Activated CD4-positive, alpha-beta T cell treated with anti-CD3 and anti-CD28 coated beads, Interleukin-2, amount 10 ng/mL, durations not matched to agents 24 days and 14 days (primary cell): ENCODE measurements at regions of chr18 and their contacts with region 1.

Region 1: GRCh38 chr18:63936156-63936931 is 12.8 kb upstream of the HMSD start:
- DNase-seq: peak; percentile 89
- H3K4me3 Mint-ChIP-seq: no peak overlapping the region
- H3K27ac Mint-ChIP-seq: peak overlapping the region; percentile 25
- H3K4me1 Mint-ChIP-seq: peaks cover 3% of the 10 kb centered on the region
- H3K27me3 Mint-ChIP-seq: peaks cover 27% of the 10 kb centered on the region

Region 2: GRCh38 chr18:63518178-63519012 is 417.9 kb before region 1 on chr18:
- intact Hi-C with region 1: loop called (anchors 2 kb)
- DNase-seq: peak; percentile 88
- H3K4me3 Mint-ChIP-seq: no peak overlapping the region
- H3K27ac Mint-ChIP-seq: no peak overlapping the region
- H3K4me1 Mint-ChIP-seq: no peaks in the 10 kb centered on the region
- H3K27me3 Mint-ChIP-seq: peaks cover 34% of the 10 kb centered on the region

Region 3: GRCh38 chr18:63823518-63824219 is 112.7 kb before region 1 on chr18:
- intact Hi-C with region 1: loop called (anchors 2 kb)
- DNase-seq: peak; percentile 77
- H3K4me3 Mint-ChIP-seq: no peak overlapping the region
- H3K27ac Mint-ChIP-seq: no peak overlapping the region
- H3K4me1 Mint-ChIP-seq: no peaks in the 10 kb centered on the region
- H3K27me3 Mint-ChIP-seq: peaks cover 12% of the 10 kb centered on the region

Region 4: DNA sequence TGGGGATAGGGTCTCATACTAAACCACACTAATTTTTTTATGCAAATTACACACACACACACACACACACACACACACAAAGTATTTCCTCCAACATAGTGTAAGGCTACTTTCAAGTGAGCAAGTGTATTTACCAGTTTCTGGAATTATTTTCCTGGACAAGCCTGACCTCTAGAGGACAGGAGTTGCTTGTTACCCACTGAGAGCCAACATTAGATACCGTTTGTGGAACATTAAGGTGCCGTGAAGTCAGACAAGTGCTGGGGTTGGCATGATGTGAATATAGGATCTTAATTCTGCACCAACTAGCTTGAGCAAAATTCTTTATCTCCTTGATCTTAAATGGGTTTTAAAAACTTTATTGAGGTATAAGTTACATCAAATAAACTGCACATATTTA is 88.2 kb before region 1 on chr18:
- intact Hi-C with region 1: loop called (anchors 5 kb)
- DNase-seq: no peak
- H3K4me3 Mint-ChIP-seq: no peak overlapping the region
- H3K27ac Mint-ChIP-seq: no peak overlapping the region
- H3K4me1 Mint-ChIP-seq: no peaks in the 10 kb centered on the region
- H3K27me3 Mint-ChIP-seq: peaks cover 33% of the 10 kb centered on the region

Region 5: DNA sequence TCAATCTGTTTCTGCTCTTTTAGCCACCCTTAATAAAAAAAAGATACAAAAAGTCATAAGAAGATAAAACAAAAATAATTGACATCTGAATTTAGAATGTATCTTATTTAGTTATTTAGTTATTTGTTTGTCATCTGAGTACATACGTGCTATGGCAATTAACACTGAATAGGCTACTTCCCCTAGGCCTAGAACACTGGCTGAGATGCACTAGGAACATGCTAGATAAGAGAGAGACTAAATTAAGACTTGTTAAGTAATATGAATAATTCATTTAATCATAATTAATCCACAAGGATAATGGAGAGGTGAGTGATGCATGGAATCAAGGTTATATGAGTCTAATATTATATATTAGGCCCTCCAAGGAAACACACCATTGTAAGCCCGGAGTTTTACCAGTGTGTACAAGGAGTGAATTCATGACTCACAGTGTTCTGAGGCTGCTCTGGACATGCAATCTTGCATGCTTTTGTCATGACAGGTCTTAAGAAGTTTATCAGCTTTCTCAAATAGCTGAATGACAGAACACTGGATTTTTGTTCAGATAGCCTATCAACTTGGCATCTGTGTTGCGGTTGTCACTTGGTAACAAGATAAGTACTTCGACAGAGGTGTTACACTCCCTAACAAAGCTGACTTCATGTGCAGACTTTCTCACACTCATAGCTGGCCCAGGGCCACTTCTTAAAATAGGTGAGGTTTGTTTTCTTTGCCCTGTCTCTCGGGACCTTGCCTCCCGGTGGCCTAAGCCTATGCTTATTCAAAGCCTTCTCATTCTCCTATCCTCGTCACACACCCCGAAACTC is 53.8 kb before region 1 on chr18:
- intact Hi-C with region 1: loop called (anchors 5 kb)
- DNase-seq: peak; percentile 31
- H3K4me3 Mint-ChIP-seq: no peak overlapping the region
- H3K27ac Mint-ChIP-seq: no peak overlapping the region
- H3K4me1 Mint-ChIP-seq: peaks cover 8% of the 10 kb centered on the region
- H3K27me3 Mint-ChIP-seq: peaks cover 13% of the 10 kb centered on the region

Region 6: DNA sequence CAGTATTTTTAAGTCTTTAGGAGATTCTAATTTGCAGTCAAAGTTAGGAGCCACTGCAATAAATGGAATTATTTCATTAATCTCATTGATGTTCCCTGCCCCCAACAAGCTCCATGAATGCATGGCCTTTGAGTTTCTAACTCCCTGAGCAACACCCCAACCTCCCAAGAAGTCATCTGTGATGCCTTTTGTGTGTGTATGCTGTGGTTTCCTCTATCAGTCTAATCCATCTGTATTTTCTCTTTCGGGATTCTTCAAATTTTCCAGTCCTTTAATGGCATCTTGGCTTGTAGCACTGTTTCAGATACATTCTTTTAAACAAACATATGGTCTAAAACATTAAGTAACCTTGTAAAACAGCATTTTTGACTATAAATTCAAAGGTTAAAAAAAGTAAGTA is 11.8 kb before region 1 on chr18:
- intact Hi-C with region 1: no loop called
- DNase-seq: no peak
- H3K4me3 Mint-ChIP-seq: no peak overlapping the region
- H3K27ac Mint-ChIP-seq: no peak overlapping the region
- H3K4me1 Mint-ChIP-seq: no peaks in the 10 kb centered on the region
- H3K27me3 Mint-ChIP-seq: peaks cover 41% of the 10 kb centered on the region

Region 7: DNA sequence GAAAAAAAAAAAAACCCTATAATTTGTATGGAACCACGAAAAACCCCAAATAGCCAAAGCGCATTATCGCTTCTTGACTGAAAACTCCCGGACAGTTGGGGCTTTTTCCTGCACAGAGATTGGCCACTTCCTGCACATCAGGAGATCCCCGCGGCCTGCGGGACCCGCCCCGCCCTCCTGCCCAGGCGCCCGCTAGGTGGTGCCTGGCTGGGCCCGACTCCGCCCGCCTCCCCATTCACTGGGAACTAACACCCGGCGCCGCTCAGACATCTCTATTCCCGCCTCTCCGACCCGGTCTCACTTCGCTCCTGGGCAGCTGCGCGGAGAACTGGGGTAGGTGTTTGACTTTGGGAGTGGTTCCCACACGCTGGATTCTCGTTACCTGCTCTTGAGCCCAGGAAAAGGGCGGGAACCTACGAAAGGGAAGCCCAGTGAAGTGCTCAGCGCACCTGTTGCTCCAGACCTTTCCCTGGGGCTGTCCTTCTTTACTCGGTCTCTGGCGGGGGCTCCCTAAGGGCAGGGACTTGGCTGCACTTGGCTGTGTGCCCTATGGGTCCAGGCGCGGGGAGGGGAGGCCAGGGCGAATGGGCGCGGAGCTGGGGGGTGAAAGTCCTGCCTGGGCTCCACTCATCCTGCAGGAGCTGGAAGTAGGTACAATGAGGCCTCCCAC is 12.9 kb after region 1 on chr18 and contains the start of gene HMSD:
- intact Hi-C with region 1: loop called (anchors 1 kb)
- DNase-seq: peak; percentile 90
- H3K4me3 Mint-ChIP-seq: peak within 1 kb of the TSS; percentile 88
- H3K27ac Mint-ChIP-seq: peak within 1 kb of the TSS; percentile 91
- H3K4me1 Mint-ChIP-seq: peaks cover 37% of the 10 kb centered on the region
- H3K27me3 Mint-ChIP-seq: peaks cover 15% of the 10 kb centered on the region
- total RNA-seq, gene HMSD: 16.8 and 25.0 TPM in 2 replicates

Region 8: DNA sequence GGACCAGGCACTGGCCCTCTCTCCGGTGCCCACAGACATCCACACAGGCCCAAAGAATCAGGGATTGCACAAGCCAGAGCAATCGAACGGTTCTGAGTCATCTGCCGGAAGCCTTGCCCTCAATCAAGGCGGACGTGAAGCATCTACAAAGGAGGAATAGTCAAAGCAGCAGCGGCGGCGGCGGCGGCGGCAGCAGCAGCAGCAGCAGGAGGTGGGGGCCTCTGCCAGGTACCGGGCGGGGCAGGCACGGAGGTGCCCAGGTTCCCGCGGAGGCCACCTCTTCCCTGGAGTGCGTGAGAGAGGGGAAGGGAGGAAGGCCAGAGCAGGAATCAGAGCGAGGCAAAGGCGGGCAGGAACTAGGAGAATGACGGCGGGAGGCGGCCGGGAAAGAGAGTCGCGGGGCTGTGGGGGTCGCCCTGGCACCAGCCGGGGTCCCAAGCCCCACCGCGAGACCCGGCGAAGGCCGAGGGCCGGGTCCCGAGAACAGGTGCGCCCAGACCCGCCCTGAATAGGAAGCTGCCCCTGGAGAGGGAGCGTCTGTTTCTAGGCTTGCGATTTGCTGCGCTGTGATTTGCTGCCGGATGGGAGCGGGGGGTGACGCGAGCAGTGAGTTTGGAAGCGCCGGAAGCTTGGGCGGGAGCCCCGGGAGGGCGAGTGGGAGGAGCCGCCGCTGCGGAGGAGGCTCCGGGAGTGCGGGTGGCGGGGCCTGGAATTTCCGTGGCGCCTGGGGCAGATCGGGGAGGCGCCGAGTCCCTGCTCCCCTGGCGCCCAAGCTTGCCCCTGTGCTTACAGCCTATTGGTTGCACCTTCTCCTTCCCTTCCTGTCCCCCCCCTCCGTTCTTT is 33.8 kb after region 1 on chr18 and contains the start of gene SERPINB8:
- intact Hi-C with region 1: loop called (anchors 5 kb)
- DNase-seq: peak; percentile 94
- H3K4me3 Mint-ChIP-seq: peak within 1 kb of the TSS; percentile 93
- H3K27ac Mint-ChIP-seq: peak within 1 kb of the TSS; percentile 92
- H3K4me1 Mint-ChIP-seq: peaks cover 35% of the 10 kb centered on the region
- H3K27me3 Mint-ChIP-seq: no peaks in the 10 kb centered on the region
- total RNA-seq, gene SERPINB8: 22.0 and 25.5 TPM in 2 replicates

Region 9: DNA sequence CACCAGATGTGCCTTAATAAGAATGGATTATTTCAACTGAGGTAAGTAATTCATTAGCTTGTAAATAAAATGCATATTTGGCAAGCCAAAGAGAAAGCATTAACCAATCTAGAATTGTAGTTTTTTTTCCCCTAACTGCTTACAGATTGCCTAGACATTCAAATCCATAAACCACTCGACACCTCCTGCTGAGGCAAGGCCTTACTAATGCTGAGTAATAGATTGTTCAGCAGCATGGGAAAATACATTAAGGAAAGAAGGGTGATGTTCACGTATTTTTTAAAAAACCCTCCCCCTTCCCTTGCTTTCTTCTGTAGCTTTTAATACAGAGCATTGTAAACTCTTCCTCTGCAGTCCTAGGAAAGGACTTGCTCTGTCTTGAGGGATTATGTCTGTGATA is 229.6 kb after region 1 on chr18:
- intact Hi-C with region 1: no loop called
- DNase-seq: no peak
- H3K4me3 Mint-ChIP-seq: no peak overlapping the region
- H3K27ac Mint-ChIP-seq: no peak overlapping the region
- H3K4me1 Mint-ChIP-seq: no peaks in the 10 kb centered on the region
- H3K27me3 Mint-ChIP-seq: no peaks in the 10 kb centered on the region